ENCODE measurements at regions of chr16 and their contacts with region 1.

Region 1: DNA sequence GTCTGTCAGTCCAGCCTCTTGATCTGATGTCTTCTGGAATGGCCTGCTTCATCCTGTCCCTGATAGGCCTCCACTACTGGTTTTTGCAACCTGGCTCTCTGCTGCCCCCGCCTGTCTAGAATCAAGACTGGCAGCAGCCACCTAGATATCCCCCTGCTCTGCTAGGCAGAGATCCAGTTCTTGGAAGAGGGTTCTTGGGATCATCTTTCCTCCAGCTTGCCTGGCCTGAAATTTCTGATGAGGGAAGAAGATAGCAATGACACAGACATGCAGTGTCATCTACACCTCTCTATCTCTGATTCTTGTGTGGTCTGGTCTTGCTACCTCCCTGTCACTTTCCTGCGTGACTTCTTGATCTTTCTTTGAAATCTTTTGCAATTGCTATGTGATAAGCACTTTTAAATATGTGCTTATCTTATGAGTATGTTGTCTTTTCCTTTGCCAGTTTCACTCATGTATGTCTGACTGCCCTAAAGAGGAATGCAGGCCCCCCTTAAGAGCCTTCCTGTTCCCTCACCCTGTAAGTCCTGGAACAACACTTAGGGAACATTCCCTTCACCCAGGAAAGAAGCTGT is 20.3 kb upstream of the NFATC3 start:
- DNase-seq: peak; percentile 64 to 81
- ATAC-seq: peak; percentile 55 to 71 (median 55)
- H3K4me3 ChIP-seq: no peak overlapping the region
- H3K4me3 Mint-ChIP-seq: peak overlapping the region; percentile 45
- H3K27ac ChIP-seq: peak overlapping the region; percentile 47
- H3K27ac Mint-ChIP-seq: peak overlapping the region; percentile 82 to 92
- H3K4me1 ChIP-seq: peaks cover 85% of the 10 kb centered on the region
- H3K4me1 Mint-ChIP-seq: peaks cover 78 to 88% of the 10 kb centered on the region in 2 donors
- H3K27me3 ChIP-seq: no peaks in the 10 kb centered on the region
- H3K27me3 Mint-ChIP-seq: no peaks in the 10 kb centered on the region
- CTCF ChIP-seq: peak; percentile 83

Region 2: GRCh38 chr16:67993189-67994039 is 71.5 kb before region 1 on chr16:
- intact Hi-C with region 1: no loop called
- DNase-seq: peak; percentile 85 to 91
- ATAC-seq: peak; percentile 88 to 95 (median 90)
- H3K4me3 ChIP-seq: peak overlapping the region; percentile 32
- H3K4me3 Mint-ChIP-seq: peak overlapping the region; percentile 83
- H3K27ac ChIP-seq: peak overlapping the region; percentile 89
- H3K27ac Mint-ChIP-seq: peak overlapping the region; percentile 89 to 95
- H3K4me1 ChIP-seq: peaks cover 75% of the 10 kb centered on the region
- H3K4me1 Mint-ChIP-seq: peaks cover 24 to 53% of the 10 kb centered on the region in 2 donors
- H3K27me3 ChIP-seq: no peaks in the 10 kb centered on the region
- H3K27me3 Mint-ChIP-seq: no peaks in the 10 kb centered on the region
- CTCF ChIP-seq: peak; percentile 92

Region 3: GRCh38 chr16:68022704-68023522 is 42.0 kb before region 1 on chr16 and contains the starts of genes DDX28 and DUS2:
- intact Hi-C with region 1: loop called (anchors 5 kb)
- DNase-seq: peak; percentile 97 to 98
- ATAC-seq: peak; percentile 90 to 96 (median 93)
- H3K4me3 ChIP-seq: peak within 1 kb of the TSS; percentile 83
- H3K4me3 Mint-ChIP-seq: peak within 1 kb of the TSS; percentile 99
- H3K27ac ChIP-seq: peak within 1 kb of the TSS; percentile 70
- H3K27ac Mint-ChIP-seq: peak within 1 kb of the TSS; percentile 91 to 96
- H3K4me1 ChIP-seq: peaks cover 26% of the 10 kb centered on the region
- H3K4me1 Mint-ChIP-seq: peaks cover 16 to 31% of the 10 kb centered on the region in 2 donors
- H3K27me3 ChIP-seq: no peaks in the 10 kb centered on the region
- H3K27me3 Mint-ChIP-seq: no peaks in the 10 kb centered on the region
- CTCF ChIP-seq: no peak
- total RNA-seq, gene DDX28: 17.4 to 19.0 (median 17.9) TPM
- total RNA-seq, gene DUS2: 21.6 to 24.2 (median 22.7) TPM

Region 4: GRCh38 chr16:68074850-68075555 is 10.1 kb after region 1 on chr16:
- intact Hi-C with region 1: loop called (anchors 1 kb)
- DNase-seq: peak; percentile 78 to 83
- ATAC-seq: peak; percentile 60 to 84 (median 82)
- H3K4me3 ChIP-seq: no peak overlapping the region
- H3K4me3 Mint-ChIP-seq: peak overlapping the region; percentile 93
- H3K27ac ChIP-seq: peak overlapping the region; percentile 73
- H3K27ac Mint-ChIP-seq: peak overlapping the region; percentile 94 to 96
- H3K4me1 ChIP-seq: peaks cover 100% of the 10 kb centered on the region
- H3K4me1 Mint-ChIP-seq: peaks cover 79 to 87% of the 10 kb centered on the region in 2 donors
- H3K27me3 ChIP-seq: no peaks in the 10 kb centered on the region
- H3K27me3 Mint-ChIP-seq: no peaks in the 10 kb centered on the region
- CTCF ChIP-seq: no peak

Region 5: GRCh38 chr16:68085259-68086071 is 20.6 kb after region 1 on chr16 and contains the start of gene NFATC3:
- intact Hi-C with region 1: loop called (anchors 2 kb)
- DNase-seq: peak; percentile 97 to 98
- ATAC-seq: peak; percentile 75 to 93 (median 83)
- H3K4me3 ChIP-seq: peak within 1 kb of the TSS; percentile 94
- H3K4me3 Mint-ChIP-seq: peak within 1 kb of the TSS; percentile 88
- H3K27ac ChIP-seq: peak within 1 kb of the TSS; percentile 95
- H3K27ac Mint-ChIP-seq: peak within 1 kb of the TSS; percentile 81 to 90
- H3K4me1 ChIP-seq: peaks cover 51% of the 10 kb centered on the region
- H3K4me1 Mint-ChIP-seq: peaks cover 67 to 72% of the 10 kb centered on the region in 2 donors
- H3K27me3 ChIP-seq: no peaks in the 10 kb centered on the region
- H3K27me3 Mint-ChIP-seq: no peaks in the 10 kb centered on the region
- CTCF ChIP-seq: no peak
- total RNA-seq, gene NFATC3: 241 to 282 (median 263) TPM

Measured in natural killer cell (primary cell).